B cell (primary cell): ENCODE measurements at regions of chr1 and their contacts with region 1.

Region 1: GRCh38 chr1:200699871-200700270 is 30.2 kb upstream of the DDX59 start:
- DNase-seq: no peak
- ATAC-seq: no peak
- H3K4me3 ChIP-seq: no peak overlapping the region
- H3K4me3 Mint-ChIP-seq: no peak overlapping the region
- H3K27ac ChIP-seq: no peak overlapping the region
- H3K27ac Mint-ChIP-seq: no peak overlapping the region
- H3K4me1 ChIP-seq: no peaks in the 10 kb centered on the region
- H3K4me1 Mint-ChIP-seq: no peaks in the 10 kb centered on the region
- H3K27me3 ChIP-seq: no peaks in the 10 kb centered on the region
- H3K27me3 Mint-ChIP-seq: peaks cover 7% of the 10 kb centered on the region
- CTCF ChIP-seq: no peak

Region 2: GRCh38 chr1:200636673-200637072 is 63.2 kb before region 1 on chr1:
- CTCF ChIA-PET with region 1: no interaction called
- POLR2A ChIA-PET with region 1: interaction called, 17 read pairs
- intact Hi-C with region 1: no loop called
- DNase-seq: no peak
- ATAC-seq: no peak
- H3K4me3 ChIP-seq: no peak overlapping the region
- H3K4me3 Mint-ChIP-seq: no peak overlapping the region
- H3K27ac ChIP-seq: no peak overlapping the region
- H3K27ac Mint-ChIP-seq: no peak overlapping the region
- H3K4me1 ChIP-seq: no peaks in the 10 kb centered on the region
- H3K4me1 Mint-ChIP-seq: peaks cover 3% of the 10 kb centered on the region
- H3K27me3 ChIP-seq: no peaks in the 10 kb centered on the region
- H3K27me3 Mint-ChIP-seq: no peaks in the 10 kb centered on the region
- CTCF ChIP-seq: peak; percentile 9